ENCODE measurements at regions of chr12 and their contacts with region 1.

Region 1: GRCh38 chr12:131311764-131312163 is 358.1 kb downstream of the ADGRD1 start:
- DNase-seq: no peak
- ATAC-seq: peak; percentile 32
- H3K4me3 Mint-ChIP-seq: no peak overlapping the region
- H3K27ac Mint-ChIP-seq: no peak overlapping the region
- H3K4me1 Mint-ChIP-seq: peaks cover 8% of the 10 kb centered on the region
- H3K27me3 Mint-ChIP-seq: peaks cover 16% of the 10 kb centered on the region
- CTCF ChIP-seq: no peak

Region 2: GRCh38 chr12:131333621-131334367 is 22.0 kb after region 1 on chr12:
- CTCF ChIA-PET with region 1: no interaction called
- POLR2A ChIA-PET with region 1: no interaction called
- intact Hi-C with region 1: no loop called
- DNase-seq: no peak
- ATAC-seq: no peak
- H3K4me3 Mint-ChIP-seq: no peak overlapping the region
- H3K27ac Mint-ChIP-seq: no peak overlapping the region
- H3K4me1 Mint-ChIP-seq: no peaks in the 10 kb centered on the region
- H3K27me3 Mint-ChIP-seq: no peaks in the 10 kb centered on the region
- CTCF ChIP-seq: no peak

Region 3: GRCh38 chr12:131513606-131514005 is 201.8 kb after region 1 on chr12:
- CTCF ChIA-PET with region 1: no interaction called
- POLR2A ChIA-PET with region 1: no interaction called
- intact Hi-C with region 1: no loop called
- DNase-seq: no peak
- ATAC-seq: no peak
- H3K4me3 Mint-ChIP-seq: no peak overlapping the region
- H3K27ac Mint-ChIP-seq: no peak overlapping the region
- H3K4me1 Mint-ChIP-seq: peaks cover 11% of the 10 kb centered on the region
- H3K27me3 Mint-ChIP-seq: peaks cover 2% of the 10 kb centered on the region
- CTCF ChIP-seq: no peak

Region 4: DNA sequence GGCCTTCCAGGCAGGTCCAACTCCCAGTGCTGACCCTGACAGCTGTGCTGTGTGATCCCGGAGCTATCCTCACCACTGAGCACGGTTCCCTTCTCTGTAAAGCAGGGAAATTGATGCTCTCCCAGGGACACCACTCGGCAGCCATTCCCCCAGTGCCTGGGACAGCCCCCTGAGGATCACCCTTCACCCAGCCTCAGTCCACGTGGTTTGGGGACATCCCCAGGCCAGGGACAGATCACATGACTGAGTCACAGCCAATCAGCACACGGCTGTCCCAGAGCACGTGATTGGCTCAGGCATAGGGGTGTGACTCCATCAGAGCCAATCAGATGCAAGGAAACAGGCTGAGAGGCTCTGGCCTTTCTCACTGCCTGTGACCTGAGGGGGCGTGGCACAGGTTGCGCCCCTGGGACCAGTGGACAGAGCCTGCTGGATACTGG is 330.4 kb after region 1 on chr12:
- CTCF ChIA-PET with region 1: no interaction called
- POLR2A ChIA-PET with region 1: no interaction called
- intact Hi-C with region 1: loop called (anchors 5 kb)
- DNase-seq: peak; percentile 42
- ATAC-seq: peak; percentile 81
- H3K4me3 Mint-ChIP-seq: no peak overlapping the region
- H3K27ac Mint-ChIP-seq: no peak overlapping the region
- H3K4me1 Mint-ChIP-seq: no peaks in the 10 kb centered on the region
- H3K27me3 Mint-ChIP-seq: peaks cover 7% of the 10 kb centered on the region
- CTCF ChIP-seq: no peak